BJ (cell line): ENCODE measurements at regions of chr1 and their contacts with region 1.

Region 1: GRCh38 chr1:26363549-26364448 is 8.8 kb downstream of the ZNF683 start:
- DNase-seq: no peak
- H3K4me3 ChIP-seq: no peak overlapping the region
- H3K27me3 ChIP-seq: peaks cover 24% of the 10 kb centered on the region
- CTCF ChIP-seq: peak; percentile 99

Region 2: DNA sequence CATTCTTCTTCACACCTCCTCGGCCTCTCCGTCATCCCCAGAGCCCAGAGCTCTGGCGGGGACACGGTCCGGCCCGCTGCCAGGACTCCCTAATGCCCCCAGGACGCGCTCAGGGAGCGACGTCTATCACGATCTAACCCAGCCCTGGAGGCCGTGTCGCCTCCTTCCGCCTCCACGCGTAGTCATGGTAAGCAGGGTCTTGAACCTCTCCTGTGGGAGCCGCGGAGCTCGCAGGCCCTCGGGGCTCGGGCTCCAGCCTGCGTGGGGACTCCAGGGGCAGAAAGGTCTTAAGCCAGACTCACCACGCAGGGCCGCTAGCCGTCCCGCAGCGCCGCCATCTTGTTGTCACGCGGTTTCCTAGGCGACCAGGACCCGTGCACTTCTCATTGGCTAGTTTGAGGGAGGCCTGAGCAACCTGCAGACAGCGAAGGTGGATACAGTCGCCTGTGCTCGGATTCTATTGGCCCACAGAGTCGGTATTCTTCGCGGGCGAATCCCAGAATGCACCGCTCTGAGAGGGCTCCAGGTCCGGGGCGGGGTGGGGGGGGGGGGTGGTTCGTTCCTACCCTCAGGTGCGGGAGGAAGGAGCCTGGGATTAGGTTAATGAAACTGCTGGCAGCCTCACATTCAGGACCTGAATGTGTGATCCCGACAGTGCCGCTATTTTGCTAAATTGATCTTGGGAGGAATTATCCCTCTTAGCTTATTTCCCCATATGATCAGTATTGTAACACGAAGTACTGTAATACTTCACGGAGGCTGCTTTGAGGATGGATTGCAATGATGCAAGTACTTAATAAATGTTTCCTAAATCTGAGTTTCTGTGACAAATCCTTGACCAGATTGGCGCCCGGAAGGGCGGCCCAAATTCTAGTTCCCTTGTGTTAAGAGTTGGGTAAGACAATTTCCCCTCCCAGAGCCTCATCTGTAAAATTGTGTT is 57.2 kb before region 1 on chr1 and contains the start of gene UBXN11:
- CTCF ChIA-PET with region 1: no interaction called
- POLR2A ChIA-PET with region 1: no interaction called
- DNase-seq: peak; percentile 79
- H3K4me3 ChIP-seq: peak within 1 kb of the TSS; percentile 88
- H3K27me3 ChIP-seq: no peaks in the 10 kb centered on the region
- CTCF ChIP-seq: no peak
- polyA plus RNA-seq, gene UBXN11: 8.5 and 12.9 TPM in 2 replicates

Region 3: DNA sequence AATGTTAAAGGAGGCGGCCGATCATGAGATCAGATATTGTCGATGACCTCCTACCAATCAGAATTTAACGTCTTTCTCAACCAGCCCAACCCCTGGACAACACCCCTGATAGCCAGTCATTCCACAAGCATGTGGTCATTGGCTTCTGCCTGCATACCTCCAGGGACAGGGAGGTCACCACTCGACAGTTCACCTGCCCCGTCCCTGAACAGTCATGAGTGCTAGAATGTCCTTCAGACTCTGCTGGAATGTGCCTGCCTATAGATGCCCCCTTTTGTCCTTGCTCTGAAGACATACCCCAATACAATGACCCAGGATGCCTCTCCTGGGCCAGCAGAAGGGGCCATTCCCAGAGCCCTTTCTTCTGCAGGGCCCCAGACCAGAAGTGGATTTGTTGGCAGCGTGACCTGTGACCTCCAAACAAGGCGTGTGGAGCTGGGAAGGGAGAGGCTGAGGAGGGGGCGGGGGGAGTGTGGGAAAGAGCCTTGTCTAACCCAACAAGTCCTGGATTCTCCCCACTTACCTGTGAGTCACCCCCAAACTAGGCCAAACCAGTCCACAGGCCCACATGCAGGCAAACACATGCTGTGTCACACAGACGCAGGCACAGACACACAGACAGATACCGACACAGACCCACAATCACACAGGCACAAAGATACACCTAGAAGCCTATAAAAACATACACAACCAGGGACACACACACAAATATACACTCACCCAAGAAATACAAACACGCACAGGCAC is 12.0 kb before region 1 on chr1:
- CTCF ChIA-PET with region 1: interaction called, 28 read pairs
- POLR2A ChIA-PET with region 1: no interaction called
- DNase-seq: no peak
- H3K4me3 ChIP-seq: no peak overlapping the region
- H3K27me3 ChIP-seq: 0 out of 2 replicates have a peak, but pooled peaks cover 1% of the 10 kb centered on the region
- CTCF ChIP-seq: no peak

Region 4: GRCh38 chr1:26378088-26378878 is 14.5 kb after region 1 on chr1:
- CTCF ChIA-PET with region 1: interaction called, 78 read pairs
- POLR2A ChIA-PET with region 1: no interaction called
- DNase-seq: peak; percentile 97
- H3K4me3 ChIP-seq: no peak overlapping the region
- H3K27me3 ChIP-seq: no peaks in the 10 kb centered on the region
- CTCF ChIP-seq: no peak

Region 5: GRCh38 chr1:26391450-26391849 is 27.7 kb after region 1 on chr1:
- CTCF ChIA-PET with region 1: interaction called, 13 read pairs
- POLR2A ChIA-PET with region 1: no interaction called
- DNase-seq: no peak
- H3K4me3 ChIP-seq: no peak overlapping the region
- H3K27me3 ChIP-seq: 0 out of 2 replicates have a peak, but pooled peaks cover 1% of the 10 kb centered on the region
- CTCF ChIP-seq: peak; percentile 89

Region 6: DNA sequence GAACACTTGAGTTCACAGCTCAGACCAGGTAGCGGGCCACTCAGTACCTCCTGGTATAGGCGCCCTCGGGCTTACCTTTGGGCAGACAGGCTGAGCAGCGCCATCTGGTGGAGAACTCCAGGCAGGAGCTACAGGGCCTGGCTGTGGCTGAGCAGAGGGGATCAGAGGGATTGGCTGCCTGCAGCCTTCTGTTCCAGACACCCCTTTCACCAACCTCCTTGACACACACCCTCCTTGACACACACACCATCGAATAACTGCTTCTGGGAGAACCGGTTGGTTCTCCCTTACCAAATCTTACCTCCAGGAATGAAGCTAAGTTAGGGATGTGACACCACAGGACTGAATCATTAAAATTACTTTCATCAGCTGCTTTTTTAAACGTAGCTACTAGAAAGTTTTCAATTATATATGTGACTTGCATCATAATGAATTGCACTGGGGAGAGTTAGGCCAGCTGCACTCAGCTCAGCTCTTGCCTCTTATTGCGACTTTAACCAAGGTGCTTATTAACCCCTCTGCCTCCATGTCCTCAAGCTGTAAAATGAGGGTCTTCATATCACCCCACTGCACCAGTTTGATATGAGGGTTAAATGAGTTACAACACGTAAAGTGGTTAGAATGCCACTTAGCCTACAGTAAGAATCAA is 53.4 kb after region 1 on chr1:
- CTCF ChIA-PET with region 1: interaction called, 10 read pairs
- POLR2A ChIA-PET with region 1: no interaction called
- DNase-seq: no peak
- H3K4me3 ChIP-seq: no peak overlapping the region
- H3K27me3 ChIP-seq: peaks cover 17% of the 10 kb centered on the region
- CTCF ChIP-seq: peak; percentile 95